ENCODE measurements at regions of chr15 and their contacts with region 1.

Region 1: DNA sequence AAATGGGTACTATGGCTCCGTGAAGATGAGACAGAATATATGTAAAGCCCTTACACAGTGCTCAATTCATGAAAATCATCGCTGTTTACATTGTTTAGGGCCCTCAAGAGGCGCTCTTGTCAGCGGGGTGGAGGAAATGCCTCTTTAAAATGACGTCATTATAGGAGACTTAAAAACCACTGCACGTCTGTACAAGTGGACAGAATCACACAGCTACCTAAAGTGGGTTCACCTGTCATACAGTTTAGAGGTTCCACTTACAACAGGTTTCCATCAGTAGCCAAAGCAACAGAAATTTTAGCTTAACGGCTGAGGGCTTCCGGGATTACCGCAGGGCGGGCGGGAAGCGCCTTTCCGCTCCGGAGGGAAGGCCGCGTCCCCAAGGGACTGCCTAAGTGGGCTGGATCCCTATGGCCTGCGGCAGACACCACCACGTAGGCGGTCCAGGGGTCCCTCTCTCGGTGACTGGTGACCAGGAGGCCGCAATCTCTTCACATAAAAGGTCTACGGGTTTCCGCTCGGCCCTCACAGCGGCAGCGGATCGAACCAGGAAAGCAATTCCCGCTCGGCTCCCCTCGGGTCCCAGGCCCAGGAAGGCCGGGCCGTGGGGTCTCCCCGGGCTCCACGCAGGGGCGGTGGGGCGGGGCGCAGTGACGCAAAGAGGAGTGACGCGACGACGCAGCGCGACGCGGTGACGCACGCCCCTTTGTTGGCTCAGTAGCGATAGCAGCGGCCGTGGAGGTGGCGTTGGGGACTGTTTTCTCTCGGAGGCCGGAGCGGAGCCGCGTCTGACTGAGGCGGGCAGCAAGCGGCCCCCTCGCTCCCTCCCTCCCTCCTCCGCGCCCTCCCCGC is at the start of gene ARIH1:
- DNase-seq: peak; percentile 95 to 99 (median 96)
- ATAC-seq: peak; percentile 72
- H3K4me3 ChIP-seq: peak within 1 kb of the TSS; percentile 93 to 100
- H3K4me3 Mint-ChIP-seq: peak within 1 kb of the TSS; percentile 97
- H3K27ac ChIP-seq: peak within 1 kb of the TSS; percentile 100
- H3K27ac Mint-ChIP-seq: peak within 1 kb of the TSS; percentile 99
- H3K4me1 ChIP-seq: peaks cover 46% of the 10 kb centered on the region
- H3K4me1 Mint-ChIP-seq: peaks cover 50% of the 10 kb centered on the region
- H3K27me3 ChIP-seq: no peaks in the 10 kb centered on the region
- H3K27me3 Mint-ChIP-seq: no peaks in the 10 kb centered on the region
- CTCF ChIP-seq: peak; percentile 42
- total RNA-seq, gene ARIH1: 343 to 351 TPM

Region 2: DNA sequence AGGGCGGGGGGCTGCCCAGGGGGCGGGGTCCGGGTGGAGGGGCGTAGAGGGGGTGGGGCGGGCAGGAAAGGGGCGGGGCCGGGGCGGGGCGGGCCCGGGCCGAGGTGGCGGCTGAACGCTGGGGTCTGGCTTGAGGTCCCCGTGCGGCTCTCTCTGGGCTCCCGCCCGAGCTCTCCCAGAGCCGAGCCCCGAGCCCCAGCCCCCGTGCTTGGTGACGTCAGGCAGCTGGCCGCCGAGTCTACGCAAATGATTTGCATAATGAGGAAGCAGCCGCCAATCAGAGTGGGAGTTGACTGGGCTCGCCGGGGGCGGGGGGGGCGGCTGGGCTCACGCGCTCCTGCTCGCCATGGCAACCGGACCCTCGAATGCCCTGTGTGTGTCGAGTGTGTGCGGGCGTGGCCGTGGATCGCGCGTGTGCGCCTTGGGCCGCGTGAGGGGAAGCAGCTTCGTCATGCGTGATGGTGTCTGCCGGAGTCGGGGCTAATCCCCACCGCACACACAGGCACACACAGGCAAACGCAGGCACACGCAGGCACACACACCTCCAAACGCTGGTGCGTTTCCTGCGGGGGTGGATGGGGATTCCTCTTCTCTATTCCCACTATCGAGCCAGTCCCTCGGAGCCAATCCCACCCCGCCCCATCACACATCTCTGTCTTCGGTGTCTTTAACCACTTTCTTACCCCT is 153.7 kb before region 1 on chr15 and contains the start of gene CELF6:
- CTCF ChIA-PET with region 1: no interaction called
- POLR2A ChIA-PET with region 1: no interaction called
- intact Hi-C with region 1: loop called in 1 of 2 experiments (anchors 1 kb)
- DNase-seq: peak; percentile 41 to 91 (median 70)
- ATAC-seq: peak; percentile 82
- H3K4me3 ChIP-seq: peak within 1 kb of the TSS; percentile 14 to 53
- H3K4me3 Mint-ChIP-seq: peak within 1 kb of the TSS; percentile 80
- H3K27ac ChIP-seq: peak within 1 kb of the TSS in 1 of 2 experiments; percentile 25
- H3K27ac Mint-ChIP-seq: peak within 1 kb of the TSS; percentile 82
- H3K4me1 ChIP-seq: peaks cover 7% of the 10 kb centered on the region
- H3K4me1 Mint-ChIP-seq: peaks cover 17% of the 10 kb centered on the region
- H3K27me3 ChIP-seq: no peaks in the 10 kb centered on the region
- H3K27me3 Mint-ChIP-seq: no peaks in the 10 kb centered on the region
- CTCF ChIP-seq: no peak
- total RNA-seq, gene CELF6: 2.4 to 2.7 TPM

Region 3: GRCh38 chr15:72491768-72492167 is 17.9 kb after region 1 on chr15:
- CTCF ChIA-PET with region 1: interaction called, 4 read pairs
- POLR2A ChIA-PET with region 1: interaction called, 4 read pairs
- intact Hi-C with region 1: loop called in 1 of 2 experiments (anchors 2 kb)
- DNase-seq: no peak
- ATAC-seq: no peak
- H3K4me3 ChIP-seq: no peak overlapping the region
- H3K4me3 Mint-ChIP-seq: no peak overlapping the region
- H3K27ac ChIP-seq: no peak overlapping the region
- H3K27ac Mint-ChIP-seq: no peak overlapping the region
- H3K4me1 ChIP-seq: peaks cover 56% of the 10 kb centered on the region
- H3K4me1 Mint-ChIP-seq: peaks cover 81% of the 10 kb centered on the region
- H3K27me3 ChIP-seq: no peaks in the 10 kb centered on the region
- H3K27me3 Mint-ChIP-seq: no peaks in the 10 kb centered on the region
- CTCF ChIP-seq: no peak

Region 4: GRCh38 chr15:72671535-72671934 is 197.7 kb after region 1 on chr15:
- CTCF ChIA-PET with region 1: interaction called, 3 read pairs
- POLR2A ChIA-PET with region 1: no interaction called
- intact Hi-C with region 1: loop called in 1 of 2 experiments (anchors 5 kb)
- DNase-seq: no peak
- ATAC-seq: no peak
- H3K4me3 ChIP-seq: no peak overlapping the region
- H3K4me3 Mint-ChIP-seq: no peak overlapping the region
- H3K27ac ChIP-seq: no peak overlapping the region
- H3K27ac Mint-ChIP-seq: no peak overlapping the region
- H3K4me1 ChIP-seq: no peaks in the 10 kb centered on the region
- H3K4me1 Mint-ChIP-seq: peaks cover 7% of the 10 kb centered on the region
- H3K27me3 ChIP-seq: peaks cover 0 to 2% of the 10 kb centered on the region in 2 experiments
- H3K27me3 Mint-ChIP-seq: peaks cover 19% of the 10 kb centered on the region
- CTCF ChIP-seq: no peak

Region 5: GRCh38 chr15:72685925-72686794 is 212.3 kb after region 1 on chr15 and contains the starts of genes BBS4 and HIGD2B:
- CTCF ChIA-PET with region 1: no interaction called
- POLR2A ChIA-PET with region 1: no interaction called
- intact Hi-C with region 1: loop called (anchors 5 kb)
- DNase-seq: peak; percentile 68 to 93 (median 86)
- ATAC-seq: peak; percentile 92
- H3K4me3 ChIP-seq: peak within 1 kb of the TSS; percentile 73 to 87
- H3K4me3 Mint-ChIP-seq: peak within 1 kb of the TSS; percentile 97
- H3K27ac ChIP-seq: peak within 1 kb of the TSS; percentile 86 to 90
- H3K27ac Mint-ChIP-seq: peak within 1 kb of the TSS; percentile 96
- H3K4me1 ChIP-seq: peaks cover 14% of the 10 kb centered on the region
- H3K4me1 Mint-ChIP-seq: peaks cover 18% of the 10 kb centered on the region
- H3K27me3 ChIP-seq: no peaks in the 10 kb centered on the region
- H3K27me3 Mint-ChIP-seq: no peaks in the 10 kb centered on the region
- CTCF ChIP-seq: no peak
- total RNA-seq, gene BBS4: 8.8 to 12.9 TPM
- total RNA-seq, gene HIGD2B: 0.27 TPM in 1 of 2 experiments, not detected in the other

Measured in CD8-positive, alpha-beta T cell (primary cell).